ENCODE measurements at regions of chr17 and their contacts with region 1.

Region 1: GRCh38 chr17:58082870-58083490 is at the start of gene DYNLL2:
- DNase-seq: peak; percentile 84
- H3K4me3 Mint-ChIP-seq: peak within 1 kb of the TSS; percentile 90
- H3K27ac Mint-ChIP-seq: peak within 1 kb of the TSS; percentile 78
- H3K4me1 Mint-ChIP-seq: peaks cover 32% of the 10 kb centered on the region
- H3K27me3 Mint-ChIP-seq: peaks cover 25% of the 10 kb centered on the region
- total RNA-seq, gene DYNLL2: 35.8 and 37.6 TPM in 2 replicates

Region 2: GRCh38 chr17:57849874-57850754 is 232.9 kb before region 1 on chr17 and contains the start of gene MRPS23:
- intact Hi-C with region 1: loop called (anchors 1 kb)
- DNase-seq: peak; percentile 96
- H3K4me3 Mint-ChIP-seq: peak within 1 kb of the TSS; percentile 99
- H3K27ac Mint-ChIP-seq: peak within 1 kb of the TSS; percentile 99
- H3K4me1 Mint-ChIP-seq: peaks cover 18% of the 10 kb centered on the region
- H3K27me3 Mint-ChIP-seq: no peaks in the 10 kb centered on the region
- total RNA-seq, gene MRPS23: 79.6 and 87.0 TPM in 2 replicates

Region 3: DNA sequence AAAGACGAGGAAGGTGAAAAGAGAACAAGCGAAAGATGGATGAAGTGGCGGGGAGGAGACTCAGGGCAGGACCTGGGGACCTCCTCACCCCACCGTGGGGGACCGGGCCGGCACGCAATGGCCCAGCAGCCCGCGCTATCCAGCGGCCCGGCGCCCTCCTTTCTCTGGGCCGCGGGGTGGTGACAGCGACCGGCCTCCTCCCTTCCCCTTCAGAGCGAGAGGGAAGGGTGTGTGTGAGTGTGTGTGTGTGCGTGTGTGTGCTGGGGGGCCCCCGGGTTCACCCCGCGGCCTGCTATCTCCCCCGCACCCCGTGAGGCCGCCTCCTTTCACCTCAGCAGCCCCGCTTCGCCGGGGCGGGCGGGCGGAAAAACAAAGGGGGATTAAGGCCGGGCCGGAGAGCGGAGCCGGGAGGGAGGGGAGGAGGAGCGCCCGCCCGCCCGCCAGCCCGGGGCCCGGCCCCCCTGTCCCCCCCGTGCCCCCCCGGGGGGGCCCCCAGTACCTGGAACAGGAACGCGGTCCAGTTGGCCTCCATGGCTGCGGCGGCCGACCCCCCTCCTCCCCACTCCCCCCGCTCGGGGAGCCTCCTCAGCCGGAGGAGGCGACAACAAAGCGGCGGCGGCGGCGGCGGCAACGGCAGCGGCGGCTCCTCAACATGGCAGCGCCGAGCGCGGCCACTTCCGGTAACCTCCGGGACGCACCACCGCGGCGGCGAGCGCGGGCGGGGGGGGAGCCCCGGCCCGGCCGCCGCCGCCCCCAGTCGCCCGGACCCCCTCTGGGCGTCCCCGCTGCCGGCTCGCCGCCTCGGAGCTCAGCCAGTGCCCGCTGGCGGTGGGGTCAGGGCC is 95.2 kb before region 1 on chr17 and contains the start of gene VEZF1:
- intact Hi-C with region 1: loop called (anchors 5 kb)
- DNase-seq: peak; percentile 72
- H3K4me3 Mint-ChIP-seq: peak within 1 kb of the TSS; percentile 93
- H3K27ac Mint-ChIP-seq: peak within 1 kb of the TSS; percentile 93
- H3K4me1 Mint-ChIP-seq: peaks cover 64% of the 10 kb centered on the region
- H3K27me3 Mint-ChIP-seq: no peaks in the 10 kb centered on the region
- total RNA-seq, gene VEZF1: 37.7 and 41.2 TPM in 2 replicates

Region 4: GRCh38 chr17:58219001-58219788 is 136.2 kb after region 1 on chr17 and contains the start of gene MKS1:
- intact Hi-C with region 1: loop called (anchors 5 kb)
- DNase-seq: peak; percentile 94
- H3K4me3 Mint-ChIP-seq: peak within 1 kb of the TSS; percentile 92
- H3K27ac Mint-ChIP-seq: peak within 1 kb of the TSS; percentile 96
- H3K4me1 Mint-ChIP-seq: peaks cover 26% of the 10 kb centered on the region
- H3K27me3 Mint-ChIP-seq: peaks cover 11% of the 10 kb centered on the region
- total RNA-seq, gene MKS1: 18.8 and 23.3 TPM in 2 replicates